Common myeloid progenitor, CD34-positive (primary cell): ENCODE measurements at regions of chr20 and their contacts with region 1.

Region 1: DNA sequence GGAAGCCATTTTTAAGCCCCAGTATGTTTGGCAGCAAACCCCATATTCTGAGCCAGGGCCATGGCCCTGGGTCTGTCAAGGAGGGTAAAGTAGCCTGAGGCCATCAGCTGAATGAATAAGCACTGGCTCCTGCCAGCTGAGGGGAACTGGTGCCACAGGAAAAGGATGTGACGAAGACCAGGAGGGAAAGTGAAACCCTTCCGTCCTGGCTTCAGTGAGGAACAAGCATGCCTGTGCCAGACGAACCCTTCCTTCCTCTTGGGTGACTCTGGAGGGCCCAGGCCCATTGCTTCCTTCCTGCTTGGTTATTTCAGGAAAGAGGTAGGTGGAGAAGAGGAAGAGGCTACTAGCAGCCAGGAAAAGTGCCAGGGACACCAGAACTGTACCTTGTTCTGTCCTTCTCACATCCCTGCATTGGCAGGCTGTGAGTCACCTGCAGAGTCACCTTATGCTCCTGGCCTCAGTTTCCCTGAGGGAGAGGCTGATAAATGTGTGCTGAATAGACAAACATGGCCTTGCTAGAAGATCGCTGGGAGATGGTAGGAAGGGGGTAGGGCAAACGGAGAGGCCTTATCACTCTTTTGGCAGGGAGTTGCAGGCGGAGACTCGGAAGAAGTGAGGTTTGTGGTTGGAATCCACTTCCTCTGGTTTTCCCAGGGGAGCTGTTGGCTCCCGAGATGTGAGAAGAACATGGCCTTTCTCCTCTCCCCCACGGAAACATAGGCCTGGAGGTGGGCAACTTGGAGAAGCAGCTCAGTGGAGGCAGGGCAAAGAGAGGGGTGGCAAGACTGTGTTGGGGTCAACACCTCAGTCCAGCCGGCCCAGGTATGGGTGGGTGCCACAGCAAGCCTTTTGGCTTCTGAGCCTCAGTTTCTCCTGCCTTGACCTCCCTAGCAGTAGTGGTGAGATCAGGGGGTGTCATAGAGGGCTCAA is 37.4 kb downstream of the COX4I2 start:
- DNase-seq: peak; percentile 97 to 99 (median 98)
- H3K4me3 ChIP-seq: peak overlapping the region in 6 of 7 experiments; percentile 23 to 68 (median 59)
- H3K27ac ChIP-seq: peak overlapping the region; percentile 43 to 88
- H3K4me1 ChIP-seq: peaks cover 20 to 90% (median 78%) of the 10 kb centered on the region in 4 experiments
- H3K27me3 ChIP-seq: no peaks in the 10 kb centered on the region

Region 2: GRCh38 chr20:31523361-31524283 is 151.5 kb before region 1 on chr20:
- CTCF ChIA-PET with region 1: no interaction called
- POLR2A ChIA-PET with region 1: no interaction called
- DNase-seq: peak; percentile 73 to 92 (median 91)
- H3K4me3 ChIP-seq: peak overlapping the region in 4 of 7 experiments; percentile 6 to 36 (median 34)
- H3K27ac ChIP-seq: peak overlapping the region; percentile 33 to 43
- H3K4me1 ChIP-seq: peaks cover 9 to 51% (median 26%) of the 10 kb centered on the region in 4 experiments
- H3K27me3 ChIP-seq: no peaks in the 10 kb centered on the region

Region 3: GRCh38 chr20:31698803-31699718 is 23.9 kb after region 1 on chr20:
- CTCF ChIA-PET with region 1: interaction called, 25 read pairs
- POLR2A ChIA-PET with region 1: no interaction called
- DNase-seq: peak in 2 of 3 donors; percentile 55 to 69
- H3K4me3 ChIP-seq: peak overlapping the region in 1 of 7 experiments; percentile 30
- H3K27ac ChIP-seq: peak overlapping the region in 1 of 2 experiments; percentile 61
- H3K4me1 ChIP-seq: peaks cover 0 to 34% (median 23%) of the 10 kb centered on the region in 4 experiments
- H3K27me3 ChIP-seq: no peaks in the 10 kb centered on the region

Region 4: GRCh38 chr20:33119725-33120720 is 1444.9 kb after region 1 on chr20:
- CTCF ChIA-PET with region 1: no interaction called
- POLR2A ChIA-PET with region 1: no interaction called
- DNase-seq: no peak
- H3K4me3 ChIP-seq: no peak overlapping the region
- H3K27ac ChIP-seq: no peak overlapping the region
- H3K4me1 ChIP-seq: no peaks in the 10 kb centered on the region
- H3K27me3 ChIP-seq: peaks cover 0 to 4% (median 0%) of the 10 kb centered on the region in 5 experiments